Activated naive CD4-positive, alpha-beta T cell treated with anti-CD3 and anti-CD28 coated beads for 36 hours (primary cell): ENCODE measurements at regions of chr7 and their contacts with region 1.

Region 1: GRCh38 chr7:120961638-120962173 is 11.1 kb downstream of the ING3 start:
- DNase-seq: no peak
- H3K4me3 Mint-ChIP-seq: no peak overlapping the region
- H3K27ac Mint-ChIP-seq: no peak overlapping the region
- H3K4me1 Mint-ChIP-seq: peaks cover 14% of the 10 kb centered on the region
- H3K27me3 Mint-ChIP-seq: no peaks in the 10 kb centered on the region

Region 2: DNA sequence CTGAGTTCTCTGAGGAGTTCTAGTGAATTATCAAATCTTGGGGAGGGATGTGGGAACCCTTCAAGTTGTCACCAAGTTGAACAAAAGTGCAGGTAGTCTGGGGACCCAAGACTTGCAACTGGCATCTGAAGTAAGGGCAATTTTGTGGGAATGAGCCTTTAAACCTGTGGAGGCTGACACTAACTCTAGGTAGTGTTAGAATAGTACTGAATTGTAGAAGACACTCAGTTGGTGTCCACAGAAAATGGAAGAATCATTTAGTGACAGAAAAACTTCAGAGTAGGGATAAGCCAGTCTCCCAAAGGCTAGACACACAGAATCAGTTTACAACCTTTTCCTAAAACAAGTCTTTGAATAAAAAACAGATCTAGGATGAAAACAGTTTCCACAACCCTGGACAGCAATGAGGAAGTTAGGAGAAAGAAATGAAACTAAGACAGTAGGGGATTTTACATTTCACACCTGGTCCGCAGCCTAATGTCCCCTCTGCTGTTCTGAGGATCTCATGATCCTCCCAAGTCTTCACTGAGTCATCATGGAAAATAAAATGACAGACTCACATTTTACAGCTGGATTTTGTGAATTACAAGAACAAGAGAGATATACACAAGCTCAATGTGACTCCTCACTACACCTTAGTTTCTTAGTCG is 34.1 kb before region 1 on chr7:
- CTCF ChIA-PET with region 1: no interaction called
- intact Hi-C with region 1: no loop called
- DNase-seq: no peak
- H3K4me3 Mint-ChIP-seq: no peak overlapping the region
- H3K27ac Mint-ChIP-seq: no peak overlapping the region
- H3K4me1 Mint-ChIP-seq: no peaks in the 10 kb centered on the region
- H3K27me3 Mint-ChIP-seq: peaks cover 2% of the 10 kb centered on the region

Region 3: GRCh38 chr7:120950539-120951308 is 11.0 kb before region 1 on chr7 and contains the start of gene ING3:
- CTCF ChIA-PET with region 1: no interaction called
- intact Hi-C with region 1: loop called (anchors 1 kb)
- DNase-seq: peak; percentile 97
- H3K4me3 Mint-ChIP-seq: peak within 1 kb of the TSS; percentile 97
- H3K27ac Mint-ChIP-seq: peak within 1 kb of the TSS; percentile 97
- H3K4me1 Mint-ChIP-seq: peaks cover 17% of the 10 kb centered on the region
- H3K27me3 Mint-ChIP-seq: peaks cover 3% of the 10 kb centered on the region
- total RNA-seq, gene ING3: 25.0 to 26.7 TPM